ENCODE measurements at regions of chr14 and their contacts with region 1.

Region 1: GRCh38 chr14:25350802-25351201 is 300.9 kb upstream of the STXBP6 start:
- DNase-seq: no peak

Region 2: DNA sequence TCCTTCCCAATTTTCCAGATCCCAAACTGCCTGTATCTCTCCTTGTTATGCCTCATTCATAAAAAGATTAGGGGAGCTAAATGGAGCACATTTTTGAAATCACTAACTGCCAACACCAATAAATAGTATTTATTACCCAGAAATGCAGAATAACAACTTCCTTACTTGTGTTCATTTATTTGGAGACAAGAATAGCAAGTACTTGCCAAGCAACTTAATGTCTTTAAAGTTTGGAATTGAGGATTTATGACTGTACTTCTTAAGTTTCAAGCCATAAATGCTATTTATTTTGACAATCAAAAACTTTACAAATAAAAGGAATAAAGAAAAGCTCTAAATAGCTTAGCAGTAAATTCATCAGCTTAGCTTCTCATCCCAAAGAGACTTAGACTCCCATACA is 1873.1 kb after region 1 on chr14:
- intact Hi-C with region 1: loop called in 1 of 2 experiments (anchors 5 kb)
- DNase-seq: no peak

Measured in posterior vena cava (tissue), 2 donors.